Heart left ventricle (tissue), 16 donors: ENCODE measurements at regions of chr20 and their contacts with region 1.

Region 1: DNA sequence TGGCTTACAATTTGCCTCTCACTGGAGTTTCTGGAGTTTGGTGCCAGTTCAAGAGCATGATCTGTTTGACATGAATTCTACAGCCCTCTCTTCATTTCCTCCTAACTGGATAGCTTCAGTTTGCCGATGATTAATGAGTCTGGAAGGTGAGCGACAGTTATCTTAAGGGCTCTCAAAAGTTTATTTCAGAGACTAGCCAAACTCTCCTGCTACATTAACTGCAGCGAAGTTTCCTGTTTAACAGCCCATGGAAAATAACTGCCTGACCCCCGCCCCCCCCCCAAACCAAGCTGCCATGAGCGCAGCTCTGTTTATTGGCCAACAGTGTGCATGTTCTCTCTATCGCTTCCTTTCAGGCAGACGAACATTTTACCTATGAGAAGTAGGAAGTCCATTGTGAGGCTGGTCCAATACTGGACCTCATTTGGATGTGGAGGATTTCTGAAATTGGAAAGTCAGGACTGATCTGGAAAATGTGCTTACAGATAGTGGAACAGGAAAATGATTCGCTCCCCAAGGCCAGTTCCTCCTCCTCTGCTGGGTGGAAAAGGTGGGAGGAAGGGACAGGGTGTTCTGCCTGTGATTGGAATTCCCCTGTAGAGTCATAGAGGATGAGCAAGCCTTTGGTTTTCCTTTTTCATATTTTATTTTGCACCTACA is 522.2 kb upstream of the JAG1 start:
- DNase-seq: peak in 1 of 5 donors; percentile 28
- ATAC-seq: peak; percentile 58 to 90 (median 70)
- H3K4me3 ChIP-seq: no peak overlapping the region
- H3K27ac ChIP-seq: peak overlapping the region in 11 of 12 donors; percentile 18 to 76 (median 59)
- H3K4me1 ChIP-seq: peaks cover 0 to 41% (median 9%) of the 10 kb centered on the region in 12 donors
- H3K27me3 ChIP-seq: no peaks in the 10 kb centered on the region
- CTCF ChIP-seq: no peak
- POLR2A ChIP-seq: no peak

Region 2: GRCh38 chr20:11117808-11118528 is 78.1 kb before region 1 on chr20:
- intact Hi-C with region 1: loop called in 1 of 10 experiments (anchors 10 kb)
- DNase-seq: no peak
- ATAC-seq: peak in 1 of 4 donors; percentile 33
- H3K4me3 ChIP-seq: no peak overlapping the region
- H3K27ac ChIP-seq: no peak overlapping the region
- H3K4me1 ChIP-seq: no peaks in the 10 kb centered on the region
- H3K27me3 ChIP-seq: no peaks in the 10 kb centered on the region
- CTCF ChIP-seq: no peak
- POLR2A ChIP-seq: no peak

Region 3: DNA sequence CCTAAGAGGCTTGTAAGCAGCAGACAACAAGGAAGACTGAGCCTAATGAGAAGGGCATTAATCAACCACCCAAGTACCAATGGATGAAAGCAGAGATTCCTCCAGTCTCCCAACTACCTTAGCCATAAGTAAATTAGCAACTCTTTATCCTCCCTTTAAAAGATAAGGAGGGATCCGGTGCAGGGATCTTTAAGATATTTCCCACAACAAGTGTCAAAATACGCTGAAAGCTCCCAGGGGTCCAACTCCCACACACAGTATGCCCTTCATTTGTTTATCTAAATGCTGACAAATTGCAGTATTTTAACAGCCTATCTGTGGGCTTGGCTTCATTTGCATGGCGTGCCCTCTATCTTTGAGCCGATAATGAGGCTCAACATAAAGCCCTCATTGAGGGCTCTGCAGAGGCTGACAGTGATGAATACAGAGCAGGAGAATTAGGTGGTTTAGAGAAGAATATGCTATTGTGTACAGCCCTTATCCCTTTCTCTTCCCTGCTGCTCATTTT is 52.7 kb after region 1 on chr20:
- intact Hi-C with region 1: no loop called
- DNase-seq: no peak
- ATAC-seq: no peak
- H3K4me3 ChIP-seq: no peak overlapping the region
- H3K27ac ChIP-seq: no peak overlapping the region
- H3K4me1 ChIP-seq: peaks cover 0 to 12% (median 0%) of the 10 kb centered on the region in 12 donors
- H3K27me3 ChIP-seq: no peaks in the 10 kb centered on the region
- CTCF ChIP-seq: no peak
- POLR2A ChIP-seq: no peak

Region 4: DNA sequence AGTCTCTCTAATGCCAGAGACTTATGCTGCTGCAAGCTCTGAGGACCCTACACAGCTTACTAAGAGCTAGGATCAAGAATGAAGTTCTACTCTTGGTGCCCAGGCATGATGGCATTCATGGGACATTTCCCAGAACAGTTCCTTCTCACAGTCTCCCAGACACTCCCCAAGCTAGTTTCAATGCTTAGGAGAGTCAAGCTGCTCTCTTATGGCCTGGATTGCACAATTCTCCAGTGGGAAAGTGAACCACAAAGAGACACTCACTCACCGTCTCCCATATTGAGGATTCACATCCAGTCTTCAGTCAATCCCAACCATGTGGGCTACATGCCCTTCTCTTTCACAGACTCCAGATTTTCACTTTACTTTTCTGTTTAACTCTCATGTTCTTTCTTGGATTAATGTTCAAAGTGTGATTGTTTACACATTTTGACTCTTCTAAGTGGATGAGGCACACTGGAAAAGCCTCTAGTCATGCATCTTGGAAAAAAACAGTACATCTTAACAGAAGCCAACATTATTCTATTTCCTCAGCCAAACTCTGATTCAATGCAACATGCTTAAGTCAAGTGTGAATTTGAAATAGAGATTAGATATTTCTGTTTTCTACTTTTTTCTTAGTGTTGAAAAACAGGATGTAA is 273.9 kb after region 1 on chr20:
- intact Hi-C with region 1: no loop called
- DNase-seq: no peak
- ATAC-seq: peak in 1 of 4 donors; percentile 37
- H3K4me3 ChIP-seq: no peak overlapping the region
- H3K27ac ChIP-seq: no peak overlapping the region
- H3K4me1 ChIP-seq: peaks cover 0 to 12% (median 0%) of the 10 kb centered on the region in 12 donors
- H3K27me3 ChIP-seq: peaks cover 0 to 4% (median 0%) of the 10 kb centered on the region in 9 donors
- CTCF ChIP-seq: no peak
- POLR2A ChIP-seq: no peak